Activated CD8-positive, alpha-beta memory T cell treated with anti-CD3 and anti-CD28 coated beads, Interleukin-2, amount 10 ng/mL, durations not matched to agents 7 days and 5 days (primary cell): ENCODE measurements at regions of chr6 and their contacts with region 1.

Region 1: DNA sequence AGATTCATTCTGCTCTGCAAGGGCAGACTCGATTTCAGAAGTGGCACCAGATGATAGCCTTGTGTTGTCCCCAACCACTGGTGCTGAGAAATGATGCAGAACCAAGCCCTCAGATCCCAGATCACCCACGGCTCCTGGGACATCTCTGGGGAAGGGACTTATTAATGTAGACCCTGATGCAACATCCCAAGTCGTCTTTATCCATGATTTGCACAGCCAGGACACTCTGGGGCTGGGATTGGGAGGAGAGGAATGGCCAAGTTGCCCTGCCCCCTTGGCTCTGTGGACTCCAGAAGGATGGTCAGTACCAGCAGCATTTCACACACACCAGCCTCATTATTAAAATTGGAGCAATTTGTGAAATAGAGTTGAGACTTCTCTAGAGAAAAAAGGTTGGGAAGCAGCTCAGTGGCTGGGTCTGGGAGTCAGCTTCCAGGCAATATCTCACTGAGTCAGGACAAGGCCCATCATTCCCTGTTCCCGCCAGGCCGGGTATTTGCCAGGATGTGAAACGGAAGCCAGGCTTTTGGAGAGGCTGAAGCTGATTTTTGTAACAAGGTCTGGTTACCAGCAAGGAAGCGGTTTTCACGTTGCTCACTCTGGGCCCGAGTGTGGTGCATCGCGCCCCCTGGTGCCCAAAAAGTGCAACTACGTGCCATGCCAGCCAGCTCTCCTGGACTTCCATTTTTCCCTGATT is 67.4 kb downstream of the ZBTB2 start:
- DNase-seq: peak; percentile 80
- ATAC-seq: peak; percentile 76
- H3K4me3 Mint-ChIP-seq: peak overlapping the region; percentile 35
- H3K27ac Mint-ChIP-seq: no peak overlapping the region
- H3K4me1 Mint-ChIP-seq: peaks cover 23% of the 10 kb centered on the region
- H3K27me3 Mint-ChIP-seq: peaks cover 70% of the 10 kb centered on the region

Region 2: GRCh38 chr6:150891888-150892485 is 432.0 kb before region 1 on chr6:
- CTCF ChIA-PET with region 1: interaction called, 189 read pairs
- DNase-seq: peak; percentile 76
- ATAC-seq: peak; percentile 57
- H3K4me3 Mint-ChIP-seq: no peak overlapping the region
- H3K27ac Mint-ChIP-seq: no peak overlapping the region
- H3K4me1 Mint-ChIP-seq: peaks cover 48% of the 10 kb centered on the region
- H3K27me3 Mint-ChIP-seq: no peaks in the 10 kb centered on the region

Region 3: GRCh38 chr6:151014404-151015100 is 309.4 kb before region 1 on chr6:
- CTCF ChIA-PET with region 1: interaction called, 179 read pairs
- DNase-seq: peak; percentile 72
- ATAC-seq: peak; percentile 69
- H3K4me3 Mint-ChIP-seq: no peak overlapping the region
- H3K27ac Mint-ChIP-seq: no peak overlapping the region
- H3K4me1 Mint-ChIP-seq: peaks cover 6% of the 10 kb centered on the region
- H3K27me3 Mint-ChIP-seq: no peaks in the 10 kb centered on the region

Region 4: DNA sequence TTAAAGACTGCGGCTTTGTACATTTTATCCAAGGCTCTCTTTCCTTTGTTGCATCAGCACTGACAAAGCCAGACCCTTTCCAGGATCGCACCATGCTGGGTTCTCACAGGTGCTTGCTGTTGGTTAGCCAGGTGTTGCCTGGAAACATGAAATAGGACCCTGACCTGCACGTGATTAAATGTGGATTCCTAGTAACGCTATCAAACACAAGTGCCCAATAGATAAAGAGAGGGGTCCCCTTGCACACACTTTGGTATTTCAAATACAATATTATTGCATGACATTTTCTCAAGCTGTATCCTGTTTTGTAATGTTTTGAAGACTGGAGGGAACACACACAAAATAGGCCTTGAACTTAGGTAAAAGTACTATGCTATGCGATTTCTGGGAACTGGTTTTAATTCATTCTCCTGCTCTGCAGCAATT is 10.9 kb before region 1 on chr6:
- CTCF ChIA-PET with region 1: interaction called, 30 read pairs
- DNase-seq: no peak
- ATAC-seq: no peak
- H3K4me3 Mint-ChIP-seq: no peak overlapping the region
- H3K27ac Mint-ChIP-seq: no peak overlapping the region
- H3K4me1 Mint-ChIP-seq: no peaks in the 10 kb centered on the region
- H3K27me3 Mint-ChIP-seq: peaks cover 38% of the 10 kb centered on the region

Region 5: GRCh38 chr6:151349651-151350282 is 25.8 kb after region 1 on chr6:
- CTCF ChIA-PET with region 1: interaction called, 14 read pairs
- DNase-seq: no peak
- ATAC-seq: no peak
- H3K4me3 Mint-ChIP-seq: no peak overlapping the region
- H3K27ac Mint-ChIP-seq: no peak overlapping the region
- H3K4me1 Mint-ChIP-seq: no peaks in the 10 kb centered on the region
- H3K27me3 Mint-ChIP-seq: no peaks in the 10 kb centered on the region